ENCODE measurements at regions of chr1 and their contacts with region 1.

Region 1: GRCh38 chr1:110619412-110620249 is 13.5 kb upstream of the KCNA2 start:
- DNase-seq: peak; percentile 88 to 93 (median 92)
- ATAC-seq: peak; percentile 88 to 92
- H3K4me3 ChIP-seq: no peak overlapping the region
- H3K27ac ChIP-seq: no peak overlapping the region
- H3K4me1 ChIP-seq: no peaks in the 10 kb centered on the region
- H3K27me3 ChIP-seq: no peaks in the 10 kb centered on the region

Region 2: GRCh38 chr1:110524311-110525251 is 95.0 kb before region 1 on chr1:
- intact Hi-C with region 1: loop called in 2 of 4 experiments (anchors 10 kb)
- DNase-seq: no peak
- ATAC-seq: peak; percentile 44 to 48
- H3K4me3 ChIP-seq: no peak overlapping the region
- H3K27ac ChIP-seq: no peak overlapping the region
- H3K4me1 ChIP-seq: no peaks in the 10 kb centered on the region
- H3K27me3 ChIP-seq: no peaks in the 10 kb centered on the region

Measured in right cardiac atrium (tissue), 5 donors.